Heart right ventricle (tissue), 16 donors: ENCODE measurements at regions of chr16 and their contacts with region 1.

Region 1: GRCh38 chr16:72501739-72502593 is 330.0 kb upstream of the PMFBP1 start:
- DNase-seq: peak; percentile 16 to 23
- ATAC-seq: peak in 4 of 8 donors; percentile 46 to 79 (median 69)
- H3K4me3 ChIP-seq: no peak overlapping the region
- H3K27ac ChIP-seq: no peak overlapping the region
- H3K4me1 ChIP-seq: no peaks in the 10 kb centered on the region
- H3K27me3 ChIP-seq: no peaks in the 10 kb centered on the region
- CTCF ChIP-seq: peak; percentile 50 to 81 (median 75)

Region 2: DNA sequence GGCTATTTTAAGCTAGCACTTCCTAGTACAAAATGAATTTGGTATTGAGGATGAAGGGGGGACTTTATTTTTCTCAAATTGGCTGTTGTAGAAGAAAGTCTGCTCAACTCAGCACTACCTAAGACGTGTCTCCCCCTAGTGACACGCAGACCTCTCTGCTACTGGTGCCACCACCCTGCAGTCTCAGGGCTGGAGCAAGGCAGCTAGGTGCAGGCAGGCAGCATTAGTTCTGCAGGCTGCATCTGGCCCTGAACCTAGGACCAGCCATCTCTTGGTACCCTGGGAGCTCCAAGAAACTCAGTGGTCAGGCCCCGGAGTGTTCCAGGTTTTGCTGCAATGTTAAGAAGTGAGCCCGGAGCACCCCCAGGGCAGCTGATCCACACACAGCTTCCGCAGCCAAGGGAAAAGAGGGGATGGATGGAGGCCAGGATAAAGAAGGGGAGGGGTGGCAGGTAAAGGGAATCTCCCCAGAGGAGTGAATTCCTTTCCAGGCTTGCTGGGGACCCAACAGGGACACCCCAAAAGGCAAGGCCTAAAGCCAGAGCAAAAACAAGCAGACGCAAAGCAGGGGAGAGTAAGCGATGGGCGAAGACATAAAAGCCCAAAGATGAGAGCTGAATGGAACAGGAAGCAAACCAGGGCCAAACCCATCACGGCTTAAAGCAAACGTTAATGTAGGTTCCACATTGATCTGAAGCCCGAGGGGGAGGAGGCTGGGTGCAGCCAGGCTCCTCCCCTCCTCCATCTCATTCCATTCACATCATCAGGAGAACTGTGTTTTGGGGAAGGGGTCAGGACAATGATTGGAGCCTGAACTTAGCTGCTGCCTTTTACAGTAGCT is 345.4 kb after region 1 on chr16:
- intact Hi-C with region 1: loop called in 1 of 10 experiments (anchors 10 kb)
- DNase-seq: peak in 1 of 2 donors; percentile 33
- ATAC-seq: peak in 6 of 8 donors; percentile 16 to 51 (median 40)
- H3K4me3 ChIP-seq: no peak overlapping the region
- H3K27ac ChIP-seq: peak overlapping the region in 9 of 10 donors; percentile 51 to 84 (median 75)
- H3K4me1 ChIP-seq: peaks cover 11 to 81% (median 52%) of the 10 kb centered on the region in 9 donors
- H3K27me3 ChIP-seq: no peaks in the 10 kb centered on the region
- CTCF ChIP-seq: peak in 7 of 9 donors; percentile 42 to 65 (median 54)

Region 3: GRCh38 chr16:73196670-73197069 is 694.7 kb after region 1 on chr16:
- intact Hi-C with region 1: loop called in 6 of 10 experiments (anchors 2 to 10 kb)
- DNase-seq: peak; percentile 48 to 67
- ATAC-seq: peak in 7 of 8 donors; percentile 61 to 94 (median 87)
- H3K4me3 ChIP-seq: no peak overlapping the region
- H3K27ac ChIP-seq: no peak overlapping the region
- H3K4me1 ChIP-seq: no peaks in the 10 kb centered on the region
- H3K27me3 ChIP-seq: peaks cover 0 to 1% (median 0%) of the 10 kb centered on the region in 7 donors
- CTCF ChIP-seq: peak; percentile 45 to 76 (median 70)

Region 4: GRCh38 chr16:73878611-73879010 is 1376.6 kb after region 1 on chr16:
- intact Hi-C with region 1: loop called in 8 of 10 experiments (anchors 1 to 10 kb)
- DNase-seq: peak in 1 of 2 donors; percentile 29
- ATAC-seq: peak in 4 of 8 donors; percentile 50 to 61 (median 55)
- H3K4me3 ChIP-seq: no peak overlapping the region
- H3K27ac ChIP-seq: no peak overlapping the region
- H3K4me1 ChIP-seq: no peaks in the 10 kb centered on the region
- H3K27me3 ChIP-seq: peaks cover 0 to 9% (median 0%) of the 10 kb centered on the region in 7 donors
- CTCF ChIP-seq: peak; percentile 26 to 84 (median 72)

Region 5: GRCh38 chr16:73956587-73957494 is 1454.9 kb after region 1 on chr16:
- intact Hi-C with region 1: loop called in 2 of 10 experiments (anchors 10 kb)
- DNase-seq: peak; percentile 21 to 56
- ATAC-seq: peak in 3 of 8 donors; percentile 44 to 61 (median 54)
- H3K4me3 ChIP-seq: no peak overlapping the region
- H3K27ac ChIP-seq: no peak overlapping the region
- H3K4me1 ChIP-seq: peaks cover 0 to 5% (median 0%) of the 10 kb centered on the region in 9 donors
- H3K27me3 ChIP-seq: peaks cover 0 to 12% (median 0%) of the 10 kb centered on the region in 7 donors
- CTCF ChIP-seq: peak; percentile 58 to 88 (median 82)